CD4-positive, alpha-beta memory T cell (primary cell): ENCODE measurements at regions of chr9 and their contacts with region 1.

Region 1: DNA sequence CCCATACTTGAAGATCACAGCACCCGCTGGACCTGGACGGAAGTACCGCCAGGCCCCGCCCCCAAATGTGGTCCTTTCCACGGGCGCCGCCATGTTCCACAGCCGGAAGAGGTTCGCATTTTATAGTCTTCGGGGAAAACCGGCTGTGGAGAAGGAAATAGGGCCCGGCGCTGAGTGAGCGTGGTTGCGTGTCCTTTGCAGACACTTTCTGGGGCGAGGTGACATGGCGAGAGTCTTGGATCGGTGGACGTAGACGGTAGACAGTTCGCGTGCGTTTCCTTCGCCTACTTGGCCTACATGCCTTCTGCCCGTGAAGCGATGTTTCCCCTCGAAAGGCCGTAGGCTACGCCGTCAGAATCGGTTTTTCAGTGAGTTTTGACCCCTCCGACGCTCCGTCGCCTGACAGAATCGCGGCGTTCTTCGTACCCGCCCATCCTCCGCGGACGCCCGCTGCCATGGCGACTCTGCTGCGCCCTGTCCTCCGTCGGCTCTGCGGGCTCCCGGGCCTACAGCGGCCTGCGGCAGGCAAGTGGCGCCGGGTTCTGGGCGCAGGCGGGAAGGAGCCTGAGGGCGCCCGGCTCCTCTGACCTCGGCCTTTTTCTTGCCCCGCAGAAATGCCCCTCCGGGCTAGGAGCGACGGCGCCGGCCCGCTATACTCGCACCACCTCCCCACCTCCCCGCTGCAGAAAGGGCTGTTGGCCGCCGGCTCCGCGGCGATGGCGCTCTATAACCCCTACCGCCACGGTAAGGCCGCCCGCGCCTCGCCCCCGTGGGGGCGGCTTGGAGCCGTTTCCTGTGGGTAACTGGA is at the starts of genes COQ4 and TRUB2:
- DNase-seq: peak; percentile 93 to 96 (median 94)
- H3K4me3 ChIP-seq: peak within 1 kb of the TSS; percentile 78 to 98
- H3K4me3 Mint-ChIP-seq: peak within 1 kb of the TSS; percentile 89 to 99 (median 92)
- H3K27ac ChIP-seq: peak within 1 kb of the TSS; percentile 83
- H3K27ac Mint-ChIP-seq: peak within 1 kb of the TSS; percentile 94 to 99 (median 98)
- H3K4me1 ChIP-seq: peaks cover 32% of the 10 kb centered on the region
- H3K4me1 Mint-ChIP-seq: peaks cover 12 to 39% (median 25%) of the 10 kb centered on the region in 4 donors
- H3K27me3 ChIP-seq: no peaks in the 10 kb centered on the region
- H3K27me3 Mint-ChIP-seq: peaks cover 0 to 2% of the 10 kb centered on the region in 2 donors
- total RNA-seq, gene COQ4: 50.0 to 51.3 TPM
- total RNA-seq, gene TRUB2: 19.6 to 19.8 TPM

Region 2: GRCh38 chr9:128026773-128027541 is 295.7 kb before region 1 on chr9:
- CTCF ChIA-PET with region 1: no interaction called
- POLR2A ChIA-PET with region 1: no interaction called
- intact Hi-C with region 1: no loop called
- DNase-seq: peak in 4 of 5 donors; percentile 50 to 75 (median 54)
- H3K4me3 ChIP-seq: peak overlapping the region; percentile 0 to 25
- H3K4me3 Mint-ChIP-seq: peak overlapping the region; percentile 74 to 89 (median 82)
- H3K27ac ChIP-seq: peak overlapping the region; percentile 80
- H3K27ac Mint-ChIP-seq: peak overlapping the region; percentile 98 to 100 (median 99)
- H3K4me1 ChIP-seq: peaks cover 100% of the 10 kb centered on the region
- H3K4me1 Mint-ChIP-seq: peaks cover 54 to 94% (median 78%) of the 10 kb centered on the region in 4 donors
- H3K27me3 ChIP-seq: no peaks in the 10 kb centered on the region
- H3K27me3 Mint-ChIP-seq: no peaks in the 10 kb centered on the region

Region 3: DNA sequence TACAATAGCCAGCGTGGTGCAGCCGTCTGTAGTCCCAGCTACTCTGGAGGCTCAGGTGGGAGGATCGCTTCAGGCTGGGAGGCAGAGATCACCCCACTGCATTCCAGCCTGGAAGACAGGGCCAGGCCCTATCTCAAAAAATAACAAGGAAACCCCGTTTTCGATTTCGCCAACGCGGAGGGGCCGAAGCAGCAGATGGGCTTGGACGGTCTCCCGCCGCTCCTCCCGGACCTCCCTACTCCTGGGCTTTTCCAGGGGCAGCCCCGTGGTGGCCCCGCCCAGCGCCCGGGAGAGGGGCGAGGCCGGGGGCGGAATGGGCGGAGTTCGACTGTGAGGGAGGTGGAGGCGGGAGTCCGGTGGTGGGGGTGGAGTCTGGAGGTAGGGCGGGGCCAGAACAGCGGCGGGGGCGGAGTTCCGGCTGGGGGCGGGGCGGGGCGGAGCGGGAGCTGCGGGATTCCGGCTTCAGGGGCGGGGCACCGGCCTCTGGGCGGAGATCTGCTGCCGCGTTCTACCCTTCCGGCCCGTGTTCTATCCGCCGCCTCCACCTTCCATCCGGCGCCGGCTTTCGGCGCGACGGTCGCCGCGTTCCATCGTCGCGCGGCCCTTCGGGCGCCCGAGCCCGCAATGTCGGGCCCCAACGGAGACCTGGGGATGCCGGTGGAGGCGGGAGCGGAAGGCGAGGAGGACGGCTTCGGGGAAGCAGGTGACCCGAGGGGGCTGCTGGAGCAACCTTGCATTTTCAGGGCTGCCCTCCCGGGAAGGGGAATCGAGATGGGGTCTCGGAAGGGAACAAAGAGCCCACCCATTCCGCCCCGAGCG is 162.6 kb before region 1 on chr9 and contains the start of gene BBLN:
- CTCF ChIA-PET with region 1: no interaction called
- POLR2A ChIA-PET with region 1: no interaction called
- intact Hi-C with region 1: loop called (anchors 1 kb)
- DNase-seq: peak; percentile 87 to 91 (median 90)
- H3K4me3 ChIP-seq: peak within 1 kb of the TSS; percentile 89 to 90
- H3K4me3 Mint-ChIP-seq: peak within 1 kb of the TSS; percentile 81 to 90 (median 82)
- H3K27ac ChIP-seq: peak within 1 kb of the TSS; percentile 89
- H3K27ac Mint-ChIP-seq: peak within 1 kb of the TSS; percentile 89 to 97 (median 93)
- H3K4me1 ChIP-seq: peaks cover 16% of the 10 kb centered on the region
- H3K4me1 Mint-ChIP-seq: peaks cover 9 to 27% (median 20%) of the 10 kb centered on the region in 4 donors
- H3K27me3 ChIP-seq: no peaks in the 10 kb centered on the region
- H3K27me3 Mint-ChIP-seq: no peaks in the 10 kb centered on the region
- total RNA-seq, gene BBLN: 47.8 to 50.5 TPM

Region 4: DNA sequence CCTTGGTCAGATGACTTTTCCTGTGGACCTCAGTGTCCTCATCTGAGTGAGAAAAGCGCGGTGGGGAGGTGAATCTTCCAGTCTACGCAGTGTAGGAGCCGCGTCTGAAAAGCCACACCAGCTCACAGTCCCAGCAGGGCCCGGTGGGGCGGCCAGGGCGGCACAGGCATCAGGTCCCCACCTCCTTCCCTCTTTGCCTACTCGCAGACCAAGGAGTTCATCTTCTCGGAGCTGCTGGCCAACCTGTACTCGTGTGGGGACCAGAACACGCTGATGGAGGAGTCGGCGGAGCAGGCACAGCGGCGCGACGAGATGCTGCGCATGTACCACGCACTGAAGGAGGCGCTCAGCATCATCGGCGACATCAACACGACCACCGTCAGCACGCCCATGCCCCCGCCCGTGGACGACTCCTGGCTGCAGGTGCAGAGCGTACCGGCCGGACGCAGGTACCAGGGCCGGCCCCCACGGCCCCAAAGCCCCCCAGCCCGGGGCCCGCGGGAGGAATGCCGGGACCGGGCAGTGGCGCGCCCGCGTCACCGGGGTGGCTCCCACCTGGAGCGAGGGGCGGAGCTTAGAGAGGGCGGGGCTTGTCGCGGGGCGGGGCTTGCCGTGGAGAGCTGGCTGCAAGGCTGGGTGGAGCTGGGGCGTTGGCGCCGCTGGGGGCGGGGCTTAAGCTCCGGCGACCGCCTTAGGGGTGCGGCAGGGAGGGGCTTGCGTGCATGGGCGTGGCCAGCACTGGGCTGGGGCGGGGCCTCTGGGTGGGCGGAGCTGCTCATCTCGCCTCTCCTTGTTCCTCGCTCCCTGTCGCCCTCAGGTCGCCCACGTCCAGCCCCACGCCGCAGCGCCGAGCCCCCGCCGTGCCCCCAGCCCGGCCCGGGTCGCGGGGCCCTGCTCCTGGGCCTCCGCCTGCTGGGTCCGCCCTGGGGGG is 72.4 kb before region 1 on chr9:
- CTCF ChIA-PET with region 1: no interaction called
- POLR2A ChIA-PET with region 1: interaction called, 4 read pairs
- intact Hi-C with region 1: loop called (anchors 1 kb)
- DNase-seq: peak; percentile 95 to 98 (median 96)
- H3K4me3 ChIP-seq: peak overlapping the region in 1 of 2 donors; percentile 75
- H3K4me3 Mint-ChIP-seq: peak overlapping the region; percentile 84 to 93 (median 87)
- H3K27ac ChIP-seq: peak overlapping the region; percentile 56
- H3K27ac Mint-ChIP-seq: peak overlapping the region; percentile 77 to 97 (median 94)
- H3K4me1 ChIP-seq: peaks cover 22% of the 10 kb centered on the region
- H3K4me1 Mint-ChIP-seq: peaks cover 10 to 30% (median 19%) of the 10 kb centered on the region in 4 donors
- H3K27me3 ChIP-seq: no peaks in the 10 kb centered on the region
- H3K27me3 Mint-ChIP-seq: peaks cover 4 to 5% of the 10 kb centered on the region in 2 donors

Region 5: GRCh38 chr9:128275996-128276573 is 46.5 kb before region 1 on chr9 and contains the starts of genes GOLGA2 and SWI5:
- CTCF ChIA-PET with region 1: no interaction called
- POLR2A ChIA-PET with region 1: interaction called, 9 read pairs
- intact Hi-C with region 1: loop called (anchors 1 kb)
- DNase-seq: peak; percentile 99 to 100 (median 100)
- H3K4me3 ChIP-seq: peak within 1 kb of the TSS; percentile 88
- H3K4me3 Mint-ChIP-seq: peak within 1 kb of the TSS; percentile 94 to 98 (median 97)
- H3K27ac ChIP-seq: peak within 1 kb of the TSS; percentile 82
- H3K27ac Mint-ChIP-seq: peak within 1 kb of the TSS; percentile 92 to 99 (median 97)
- H3K4me1 ChIP-seq: peaks cover 28% of the 10 kb centered on the region
- H3K4me1 Mint-ChIP-seq: peaks cover 17 to 43% (median 32%) of the 10 kb centered on the region in 4 donors
- H3K27me3 ChIP-seq: no peaks in the 10 kb centered on the region
- H3K27me3 Mint-ChIP-seq: no peaks in the 10 kb centered on the region
- total RNA-seq, gene GOLGA2: 76.4 to 82.4 TPM
- total RNA-seq, gene SWI5: 11.5 to 14.9 TPM

Region 6: GRCh38 chr9:128370826-128371621 is 48.4 kb after region 1 on chr9 and contains the start of gene URM1:
- CTCF ChIA-PET with region 1: no interaction called
- POLR2A ChIA-PET with region 1: interaction called, 8 read pairs
- intact Hi-C with region 1: loop called (anchors 1 kb)
- DNase-seq: peak; percentile 95 to 98 (median 96)
- H3K4me3 ChIP-seq: peak within 1 kb of the TSS; percentile 88 to 95
- H3K4me3 Mint-ChIP-seq: peak within 1 kb of the TSS; percentile 95 to 98 (median 96)
- H3K27ac ChIP-seq: peak within 1 kb of the TSS; percentile 91
- H3K27ac Mint-ChIP-seq: peak within 1 kb of the TSS; percentile 97 to 99 (median 98)
- H3K4me1 ChIP-seq: peaks cover 20% of the 10 kb centered on the region
- H3K4me1 Mint-ChIP-seq: peaks cover 22 to 37% (median 29%) of the 10 kb centered on the region in 4 donors
- H3K27me3 ChIP-seq: no peaks in the 10 kb centered on the region
- H3K27me3 Mint-ChIP-seq: peaks cover 2 to 4% of the 10 kb centered on the region in 2 donors
- total RNA-seq, gene URM1: 44.1 to 45.5 TPM